HEK293 (cell line): ENCODE measurements at regions of chr4 and their contacts with region 1.

Region 1: GRCh38 chr4:70993181-70994068 is at the start of gene DCK:
- H3K4me3 ChIP-seq: peak within 1 kb of the TSS; percentile 85
- H3K27ac ChIP-seq: peak within 1 kb of the TSS; percentile 67
- H3K4me1 ChIP-seq: no peaks in the 10 kb centered on the region
- CTCF ChIP-seq: no peak

Region 2: GRCh38 chr4:70901984-70902576 is 91.3 kb before region 1 on chr4 and contains the start of gene MOB1B:
- CTCF ChIA-PET with region 1: interaction called, 3 read pairs
- POLR2A ChIA-PET with region 1: interaction called, 16 read pairs
- H3K4me3 ChIP-seq: peak within 1 kb of the TSS; percentile 82
- H3K27ac ChIP-seq: peak within 1 kb of the TSS; percentile 55; the same call in 1 of the 2 replicates
- H3K4me1 ChIP-seq: no peaks in the 10 kb centered on the region
- CTCF ChIP-seq: no peak

Region 3: GRCh38 chr4:71009890-71010588 is 16.6 kb after region 1 on chr4:
- CTCF ChIA-PET with region 1: interaction called, 20 read pairs
- POLR2A ChIA-PET with region 1: interaction called, 6 read pairs
- H3K4me3 ChIP-seq: no peak overlapping the region
- H3K27ac ChIP-seq: no peak overlapping the region
- H3K4me1 ChIP-seq: no peaks in the 10 kb centered on the region
- CTCF ChIP-seq: no peak